Panc1 (cell line): ENCODE measurements at regions of chr7 and their contacts with region 1.

Region 1: DNA sequence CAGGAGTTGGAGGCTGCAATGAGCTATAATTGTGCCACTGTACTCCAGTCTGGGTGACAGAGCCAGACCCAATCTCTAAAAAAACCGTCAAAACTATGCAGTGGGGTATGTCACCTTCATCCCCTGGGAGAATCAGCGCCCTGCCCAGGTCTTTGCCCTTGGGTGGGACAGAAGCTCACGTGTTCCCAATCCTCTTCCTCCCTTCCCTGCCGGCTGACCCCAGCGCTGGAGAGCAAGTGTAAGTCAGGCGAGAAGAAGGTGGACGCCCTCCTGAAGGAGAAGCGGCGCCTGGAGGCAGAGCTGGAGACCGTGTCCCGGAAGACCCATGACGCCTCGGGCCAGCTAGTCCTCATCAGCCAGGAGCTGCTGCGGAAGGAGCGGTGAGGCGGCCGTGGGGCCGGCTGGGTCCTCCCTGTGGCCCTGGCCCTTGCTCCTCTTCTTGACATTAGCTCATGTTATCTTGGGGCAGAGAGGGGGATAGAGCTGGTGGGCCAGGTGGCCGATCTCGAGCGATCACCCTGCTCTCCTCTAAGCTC is 64.8 kb upstream of the GTF2IRD1 start:
- DNase-seq: no peak
- ATAC-seq: no peak
- H3K4me3 ChIP-seq: no peak overlapping the region
- H3K27ac ChIP-seq: no peak overlapping the region
- H3K4me1 ChIP-seq: no peaks in the 10 kb centered on the region
- H3K27me3 ChIP-seq: no peaks in the 10 kb centered on the region
- CTCF ChIP-seq: no peak

Region 2: GRCh38 chr7:74254129-74254857 is 134.7 kb before region 1 on chr7 and contains the start of gene RFC2:
- CTCF ChIA-PET with region 1: no interaction called
- POLR2A ChIA-PET with region 1: interaction called, 10 read pairs
- in situ Hi-C with region 1: no loop called
- intact Hi-C with region 1: no loop called
- DNase-seq: peak; percentile 71
- ATAC-seq: peak; percentile 99
- H3K4me3 ChIP-seq: peak within 1 kb of the TSS; percentile 74 to 88
- H3K27ac ChIP-seq: peak within 1 kb of the TSS; percentile 85
- H3K4me1 ChIP-seq: peaks cover 15% of the 10 kb centered on the region
- H3K27me3 ChIP-seq: no peaks in the 10 kb centered on the region
- CTCF ChIP-seq: no peak
- total RNA-seq, gene RFC2: 56.2 TPM

Region 3: GRCh38 chr7:74401137-74401859 is 12.3 kb after region 1 on chr7:
- CTCF ChIA-PET with region 1: interaction called, 11 read pairs
- POLR2A ChIA-PET with region 1: no interaction called
- in situ Hi-C with region 1: no loop called
- intact Hi-C with region 1: no loop called
- DNase-seq: peak; percentile 75
- ATAC-seq: peak; percentile 84
- H3K4me3 ChIP-seq: no peak overlapping the region
- H3K27ac ChIP-seq: no peak overlapping the region
- H3K4me1 ChIP-seq: no peaks in the 10 kb centered on the region
- H3K27me3 ChIP-seq: no peaks in the 10 kb centered on the region
- CTCF ChIP-seq: peak; percentile 97